Right ventricle myocardium inferior (tissue), 1 donor: ENCODE measurements at regions of chr17 and their contacts with region 1.

Region 1: GRCh38 chr17:30970831-30971567 is at the start of gene RNF135:
- DNase-seq: peak; percentile 93
- ATAC-seq: peak; percentile 97
- total RNA-seq, gene RNF135: 5.7 TPM

Region 2: DNA sequence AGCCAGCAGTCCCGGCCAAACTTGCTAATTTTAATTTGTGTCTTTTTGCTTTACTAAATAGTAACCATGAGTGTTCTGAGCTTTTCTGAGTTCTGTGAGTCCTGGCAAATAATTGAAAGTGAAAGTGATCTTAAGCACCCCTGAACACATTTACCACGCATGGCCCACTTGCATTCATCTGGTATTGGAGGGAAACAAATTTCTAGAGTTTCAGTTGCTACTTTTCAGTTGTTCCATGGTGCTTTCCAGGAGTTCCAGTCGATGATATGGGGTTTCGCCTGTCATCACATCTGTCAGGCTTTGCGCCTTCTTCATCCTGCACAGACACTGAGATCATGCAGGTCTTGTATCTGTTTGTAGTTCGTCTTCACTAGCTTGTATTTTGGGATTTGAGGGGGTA is 190.7 kb before region 1 on chr17:
- intact Hi-C with region 1: no loop called
- DNase-seq: no peak
- ATAC-seq: no peak

Region 3: GRCh38 chr17:30906101-30906911 is 64.7 kb before region 1 on chr17 and contains the start of gene TEFM:
- intact Hi-C with region 1: loop called (anchors 1 kb)
- DNase-seq: peak; percentile 94
- ATAC-seq: peak; percentile 99
- total RNA-seq, gene TEFM: 15.6 TPM

Region 4: GRCh38 chr17:31008374-31009041 is 37.5 kb after region 1 on chr17:
- intact Hi-C with region 1: loop called (anchors 5 kb)
- DNase-seq: peak; percentile 81
- ATAC-seq: peak; percentile 88

Region 5: GRCh38 chr17:31019004-31019403 is 48.0 kb after region 1 on chr17:
- intact Hi-C with region 1: no loop called
- DNase-seq: no peak
- ATAC-seq: no peak